OCI-LY7 (cell line): ENCODE measurements at regions of chr10 and their contacts with region 1.

Region 1: GRCh38 chr10:33150889-33151288 is 183.6 kb downstream of the NRP1 start:
- DNase-seq: peak; percentile 69
- H3K4me3 ChIP-seq: peak overlapping the region; percentile 8
- H3K27ac ChIP-seq: peak overlapping the region; percentile 81
- H3K4me1 ChIP-seq: peaks cover 59% of the 10 kb centered on the region
- CTCF ChIP-seq: no peak

Region 2: GRCh38 chr10:33115738-33116719 is 34.9 kb before region 1 on chr10:
- CTCF ChIA-PET with region 1: no interaction called
- POLR2A ChIA-PET with region 1: interaction called, 4 read pairs
- intact Hi-C with region 1: loop called (anchors 2 kb)
- DNase-seq: peak; percentile 55
- H3K4me3 ChIP-seq: no peak overlapping the region
- H3K27ac ChIP-seq: peak overlapping the region; percentile 95
- H3K4me1 ChIP-seq: peaks cover 58% of the 10 kb centered on the region
- CTCF ChIP-seq: peak; percentile 82

Region 3: GRCh38 chr10:33248638-33249037 is 97.7 kb after region 1 on chr10:
- CTCF ChIA-PET with region 1: no interaction called
- POLR2A ChIA-PET with region 1: no interaction called
- intact Hi-C with region 1: no loop called
- DNase-seq: peak; percentile 3
- H3K4me3 ChIP-seq: no peak overlapping the region
- H3K27ac ChIP-seq: no peak overlapping the region
- H3K4me1 ChIP-seq: no peaks in the 10 kb centered on the region
- CTCF ChIP-seq: no peak